Naive thymus-derived CD4-positive, alpha-beta T cell (primary cell): ENCODE measurements at regions of chr7 and their contacts with region 1.

Region 1: GRCh38 chr7:31744294-31744874 is 57.4 kb downstream of the PPP1R17 start:
- DNase-seq: peak in 1 of 9 donors; percentile 39
- ATAC-seq: peak; percentile 53
- H3K4me3 ChIP-seq: no peak overlapping the region
- H3K4me3 Mint-ChIP-seq: no peak overlapping the region
- H3K27ac ChIP-seq: no peak overlapping the region
- H3K27ac Mint-ChIP-seq: no peak overlapping the region
- H3K4me1 ChIP-seq: no peaks in the 10 kb centered on the region
- H3K4me1 Mint-ChIP-seq: no peaks in the 10 kb centered on the region
- H3K27me3 ChIP-seq: no peaks in the 10 kb centered on the region
- H3K27me3 Mint-ChIP-seq: peaks cover 0 to 13% (median 2%) of the 10 kb centered on the region in 5 donors

Region 2: DNA sequence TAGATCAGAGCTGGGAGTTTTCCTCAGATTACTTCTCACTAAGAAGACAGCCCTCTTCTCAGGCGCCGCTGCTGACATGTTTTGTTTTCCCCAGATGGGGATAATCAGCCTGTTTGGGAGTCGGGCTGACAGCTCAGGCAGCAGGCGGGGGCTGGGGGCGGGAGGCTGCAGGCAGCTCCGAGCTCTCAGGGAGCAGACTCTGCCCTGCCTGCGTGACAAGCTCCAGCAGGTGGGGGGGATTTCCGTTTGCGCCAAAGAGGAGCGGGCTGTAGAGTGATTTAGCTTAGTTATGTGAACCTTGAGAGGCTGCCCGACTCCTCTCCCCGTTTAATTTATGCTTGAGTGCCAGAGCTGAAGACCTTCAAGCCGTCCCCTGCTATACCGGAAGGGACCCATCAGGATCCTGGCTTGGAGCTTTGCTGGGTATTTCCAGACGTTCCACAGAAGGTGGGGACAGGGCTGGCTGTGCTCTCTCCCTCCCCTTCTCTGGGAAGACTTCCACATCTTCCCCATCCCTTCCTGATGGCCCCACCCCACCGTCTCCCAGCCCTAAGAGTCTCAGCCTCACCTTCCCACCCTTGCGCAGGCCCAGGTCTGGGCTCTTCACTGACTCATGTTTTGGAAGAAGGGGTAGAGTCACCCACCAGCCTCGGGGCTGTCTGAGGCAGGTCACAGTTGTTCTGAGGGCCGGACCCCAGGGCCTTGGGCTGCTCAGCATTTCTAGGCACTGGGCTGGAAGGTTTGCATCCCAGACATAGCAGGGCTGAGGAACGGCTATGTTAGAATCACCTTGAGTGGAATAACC is 717.0 kb before region 1 on chr7:
- CTCF ChIA-PET with region 1: no interaction called
- POLR2A ChIA-PET with region 1: no interaction called
- intact Hi-C with region 1: no loop called
- DNase-seq: no peak
- ATAC-seq: no peak
- H3K4me3 ChIP-seq: no peak overlapping the region
- H3K4me3 Mint-ChIP-seq: no peak overlapping the region
- H3K27ac ChIP-seq: no peak overlapping the region
- H3K27ac Mint-ChIP-seq: no peak overlapping the region
- H3K4me1 ChIP-seq: peaks cover 0 to 8% of the 10 kb centered on the region in 2 donors
- H3K4me1 Mint-ChIP-seq: peaks cover 0 to 27% (median 10%) of the 10 kb centered on the region in 7 donors
- H3K27me3 ChIP-seq: no peaks in the 10 kb centered on the region
- H3K27me3 Mint-ChIP-seq: peaks cover 0 to 6% (median 4%) of the 10 kb centered on the region in 5 donors

Region 3: DNA sequence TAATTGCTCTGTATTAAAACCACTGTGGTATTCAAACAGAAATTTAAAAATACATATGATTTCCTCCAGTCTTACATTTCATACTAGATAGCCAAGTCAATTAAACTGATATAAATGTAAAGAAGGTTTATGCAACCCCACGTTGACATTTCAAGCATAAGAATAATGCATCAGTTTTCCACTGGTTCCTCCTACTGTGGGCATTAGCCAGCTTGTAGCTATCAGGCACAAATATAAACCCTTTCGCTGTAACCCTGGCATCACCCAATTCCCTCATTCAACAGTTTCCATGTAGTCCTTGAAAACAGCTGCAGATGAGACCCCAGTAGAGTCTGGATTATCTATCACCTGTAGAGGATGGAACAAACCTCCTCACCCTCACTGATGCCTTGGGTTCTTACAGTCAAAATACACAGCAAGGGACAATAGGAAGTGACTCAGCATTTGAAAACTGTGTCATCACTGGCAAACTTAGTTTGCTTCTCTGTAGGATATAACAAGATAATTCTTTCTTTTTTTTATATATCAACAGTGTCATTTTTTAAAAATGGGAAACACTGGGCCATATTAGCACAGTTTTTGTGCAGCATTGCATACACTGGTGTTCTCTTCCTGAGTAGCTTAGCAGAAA is 212.8 kb after region 1 on chr7:
- CTCF ChIA-PET with region 1: no interaction called
- POLR2A ChIA-PET with region 1: no interaction called
- intact Hi-C with region 1: no loop called
- DNase-seq: no peak
- ATAC-seq: no peak
- H3K4me3 ChIP-seq: no peak overlapping the region
- H3K4me3 Mint-ChIP-seq: no peak overlapping the region
- H3K27ac ChIP-seq: no peak overlapping the region
- H3K27ac Mint-ChIP-seq: no peak overlapping the region
- H3K4me1 ChIP-seq: no peaks in the 10 kb centered on the region
- H3K4me1 Mint-ChIP-seq: no peaks in the 10 kb centered on the region
- H3K27me3 ChIP-seq: no peaks in the 10 kb centered on the region
- H3K27me3 Mint-ChIP-seq: no peaks in the 10 kb centered on the region

Region 4: GRCh38 chr7:32204361-32205018 is 460.1 kb after region 1 on chr7:
- CTCF ChIA-PET with region 1: no interaction called
- POLR2A ChIA-PET with region 1: no interaction called
- intact Hi-C with region 1: loop called in 1 of 2 experiments (anchors 10 kb)
- DNase-seq: no peak
- ATAC-seq: no peak
- H3K4me3 ChIP-seq: no peak overlapping the region
- H3K4me3 Mint-ChIP-seq: no peak overlapping the region
- H3K27ac ChIP-seq: no peak overlapping the region
- H3K27ac Mint-ChIP-seq: no peak overlapping the region
- H3K4me1 ChIP-seq: no peaks in the 10 kb centered on the region
- H3K4me1 Mint-ChIP-seq: no peaks in the 10 kb centered on the region
- H3K27me3 ChIP-seq: no peaks in the 10 kb centered on the region
- H3K27me3 Mint-ChIP-seq: peaks cover 0 to 17% (median 9%) of the 10 kb centered on the region in 5 donors

Region 5: DNA sequence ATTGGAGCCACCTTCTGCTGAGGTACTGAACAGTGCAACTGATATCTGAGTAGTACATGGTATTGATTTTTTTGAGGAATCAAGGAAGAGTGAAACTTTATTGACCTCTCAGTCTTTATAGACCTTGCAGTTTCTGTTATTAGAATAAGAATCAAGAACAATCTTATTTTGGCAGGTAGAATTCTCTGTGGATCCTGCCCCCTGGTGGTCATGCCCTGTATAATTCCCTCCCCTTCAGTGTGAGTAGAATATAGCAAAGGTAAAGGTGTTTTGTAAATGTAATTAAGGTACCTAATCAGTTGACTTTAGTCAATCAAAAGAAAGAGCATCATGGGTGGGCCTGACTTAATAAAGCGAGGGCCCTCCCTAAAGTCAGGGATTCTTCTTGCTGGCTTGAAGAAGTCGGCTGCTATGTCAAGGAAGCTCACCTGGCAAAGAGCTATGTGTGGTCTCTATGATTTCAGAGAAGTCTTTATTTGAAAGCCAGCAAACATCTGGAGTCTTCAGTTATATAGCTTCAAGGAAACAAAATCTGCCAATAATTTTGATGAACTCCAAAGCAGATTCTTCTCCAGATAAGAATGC is 603.0 kb after region 1 on chr7:
- CTCF ChIA-PET with region 1: no interaction called
- POLR2A ChIA-PET with region 1: no interaction called
- intact Hi-C with region 1: loop called in 1 of 2 experiments (anchors 2 kb)
- DNase-seq: no peak
- ATAC-seq: no peak
- H3K4me3 ChIP-seq: no peak overlapping the region
- H3K4me3 Mint-ChIP-seq: no peak overlapping the region
- H3K27ac ChIP-seq: no peak overlapping the region
- H3K27ac Mint-ChIP-seq: no peak overlapping the region
- H3K4me1 ChIP-seq: no peaks in the 10 kb centered on the region
- H3K4me1 Mint-ChIP-seq: no peaks in the 10 kb centered on the region
- H3K27me3 ChIP-seq: no peaks in the 10 kb centered on the region
- H3K27me3 Mint-ChIP-seq: peaks cover 0 to 8% (median 4%) of the 10 kb centered on the region in 5 donors

Region 6: DNA sequence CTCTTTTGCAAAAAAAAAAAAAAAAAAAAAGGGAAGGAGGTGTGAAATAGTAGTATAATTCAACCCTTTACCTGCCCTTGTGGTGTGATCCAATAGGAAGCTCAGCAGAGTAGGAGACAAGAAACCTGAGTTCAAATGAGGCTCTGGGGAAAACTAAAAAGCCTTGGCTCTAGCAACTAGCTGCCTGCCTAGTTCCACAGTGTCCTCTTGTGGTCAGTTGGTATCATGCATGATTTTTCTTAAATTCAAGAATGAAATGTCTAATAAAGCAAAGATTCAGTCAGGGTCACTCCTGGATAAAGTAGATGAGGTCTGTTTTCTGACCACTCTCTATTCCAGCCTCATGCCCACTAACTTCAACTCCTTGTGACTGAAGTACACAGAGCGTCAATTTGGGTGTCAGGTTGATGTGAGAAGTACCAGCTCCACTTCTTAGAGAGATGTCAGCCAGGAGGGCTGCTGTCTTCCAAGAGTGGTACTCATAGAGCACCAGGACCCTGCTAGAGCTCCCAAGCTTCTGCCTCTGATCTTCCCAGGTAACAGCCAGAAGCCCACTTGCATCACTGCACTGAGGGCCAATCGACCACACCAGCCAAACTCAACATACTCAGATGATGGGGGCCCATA is 735.3 kb after region 1 on chr7:
- CTCF ChIA-PET with region 1: no interaction called
- POLR2A ChIA-PET with region 1: no interaction called
- intact Hi-C with region 1: loop called in 1 of 2 experiments (anchors 5 kb)
- DNase-seq: no peak
- ATAC-seq: peak; percentile 48
- H3K4me3 ChIP-seq: no peak overlapping the region
- H3K4me3 Mint-ChIP-seq: no peak overlapping the region
- H3K27ac ChIP-seq: no peak overlapping the region
- H3K27ac Mint-ChIP-seq: no peak overlapping the region
- H3K4me1 ChIP-seq: no peaks in the 10 kb centered on the region
- H3K4me1 Mint-ChIP-seq: peaks cover 2 to 10% (median 7%) of the 10 kb centered on the region in 7 donors
- H3K27me3 ChIP-seq: no peaks in the 10 kb centered on the region
- H3K27me3 Mint-ChIP-seq: no peaks in the 10 kb centered on the region